ENCODE measurements at regions of chr11 and their contacts with region 1.

Region 1: GRCh38 chr11:58039589-58039988 is 8.8 kb downstream of the OR6Q1 start:
- DNase-seq: no peak
- ATAC-seq: no peak
- H3K4me3 ChIP-seq: no peak overlapping the region
- H3K27ac ChIP-seq: no peak overlapping the region
- H3K4me1 ChIP-seq: no peaks in the 10 kb centered on the region; the same call in 1 of the 2 replicates
- H3K27me3 ChIP-seq: no peaks in the 10 kb centered on the region; a peak in 1 of 5 replicates
- CTCF ChIP-seq: no peak
- EP300 ChIP-seq: no peak
- POLR2A ChIP-seq: no peak
- RAD21 ChIP-seq: no peak

Region 2: DNA sequence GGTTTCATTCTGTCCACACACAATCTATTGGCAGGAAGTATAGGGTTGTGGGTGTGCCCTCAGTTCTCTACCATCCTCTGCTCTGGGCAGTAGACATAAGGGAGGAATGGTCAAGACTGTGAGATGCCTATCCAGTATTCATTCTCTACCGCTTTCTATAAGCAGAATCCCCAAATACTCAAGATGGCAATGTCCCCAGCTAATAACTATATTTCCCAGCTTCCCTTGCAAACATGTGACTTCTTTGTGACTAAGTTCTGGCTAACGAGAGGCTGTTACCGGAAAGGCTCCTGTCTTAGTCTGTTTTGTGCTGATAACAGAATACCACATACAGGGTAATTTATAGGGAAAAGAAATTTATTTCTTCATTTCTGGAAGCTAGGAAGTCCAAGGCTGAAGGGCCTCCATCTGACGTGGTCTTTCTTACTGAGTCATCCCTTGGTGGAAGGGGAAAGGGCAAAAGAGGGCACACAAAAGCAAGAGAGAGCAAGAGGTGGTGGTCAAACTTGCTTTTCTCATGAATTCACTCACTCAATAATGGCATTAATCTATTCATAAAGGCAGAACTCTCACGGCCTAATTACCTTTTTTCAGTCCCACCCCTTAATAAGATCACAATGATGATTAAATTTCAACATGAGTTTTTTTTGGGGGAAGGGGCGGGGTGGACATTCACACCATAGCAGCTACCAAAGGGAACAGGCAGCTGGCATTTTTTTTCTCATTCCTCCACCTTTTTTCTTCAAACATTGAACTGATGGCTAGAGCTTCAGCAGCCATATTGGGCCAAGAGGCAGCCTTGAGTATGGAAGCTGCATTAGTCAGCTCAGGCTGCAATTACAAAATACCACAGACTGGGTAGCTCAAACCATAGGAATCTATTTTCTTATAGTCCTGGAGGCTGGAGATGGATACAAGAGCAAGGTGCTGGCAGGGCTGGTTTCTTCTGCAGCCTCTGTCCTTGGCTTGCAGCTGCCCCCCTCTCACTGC is 125.6 kb before region 1 on chr11:
- CTCF ChIA-PET with region 1: no interaction called
- POLR2A ChIA-PET with region 1: no interaction called
- in situ Hi-C with region 1: no loop called
- intact Hi-C with region 1: loop called (anchors 10 kb)
- DNase-seq: no peak
- ATAC-seq: no peak
- H3K4me3 ChIP-seq: no peak overlapping the region
- H3K27ac ChIP-seq: no peak overlapping the region
- H3K4me1 ChIP-seq: no peaks in the 10 kb centered on the region
- H3K27me3 ChIP-seq: peaks cover 5 to 18% of the 10 kb centered on the region in 2 experiments; a peak in 3 of 5 replicates
- CTCF ChIP-seq: no peak
- EP300 ChIP-seq: no peak
- POLR2A ChIP-seq: no peak
- RAD21 ChIP-seq: no peak

Region 3: GRCh38 chr11:57940044-57940756 is 99.4 kb before region 1 on chr11:
- CTCF ChIA-PET with region 1: no interaction called
- POLR2A ChIA-PET with region 1: no interaction called
- in situ Hi-C with region 1: no loop called
- intact Hi-C with region 1: no loop called
- DNase-seq: no peak
- ATAC-seq: no peak
- H3K4me3 ChIP-seq: no peak overlapping the region
- H3K27ac ChIP-seq: no peak overlapping the region
- H3K4me1 ChIP-seq: peaks cover 70% of the 10 kb centered on the region
- H3K27me3 ChIP-seq: no peaks in the 10 kb centered on the region; a peak in 1 of 5 replicates
- CTCF ChIP-seq: no peak
- EP300 ChIP-seq: no peak
- POLR2A ChIP-seq: no peak
- RAD21 ChIP-seq: no peak

Region 4: DNA sequence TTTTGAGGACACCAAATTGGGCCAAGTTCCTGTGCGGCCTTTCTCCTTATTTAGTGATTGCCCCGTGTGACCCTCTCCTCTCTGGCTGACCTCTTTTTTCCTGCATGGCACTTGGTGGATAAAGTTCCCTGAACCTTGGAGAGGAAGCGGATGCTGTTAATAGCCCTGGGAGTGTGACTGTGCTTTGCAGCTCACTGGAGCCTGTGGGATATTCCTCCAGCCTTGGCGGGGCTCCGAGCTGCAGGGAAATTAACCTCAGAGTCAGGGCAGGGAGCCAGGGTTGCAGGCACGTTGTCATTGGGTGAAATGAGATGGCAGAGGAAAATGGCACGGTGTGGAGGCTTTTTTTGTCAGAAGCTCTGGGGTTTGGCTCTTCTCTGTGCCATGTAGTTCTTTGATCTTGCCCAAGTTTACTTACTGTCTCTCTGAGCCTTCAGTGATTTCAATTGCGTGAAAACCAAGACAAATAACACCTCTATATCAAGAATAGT is 14.9 kb before region 1 on chr11:
- CTCF ChIA-PET with region 1: no interaction called
- POLR2A ChIA-PET with region 1: no interaction called
- in situ Hi-C with region 1: no loop called
- intact Hi-C with region 1: no loop called
- DNase-seq: no peak
- ATAC-seq: peak; percentile 41; the same call in 2 of the 3 replicates
- H3K4me3 ChIP-seq: no peak overlapping the region
- H3K27ac ChIP-seq: no peak overlapping the region
- H3K4me1 ChIP-seq: peaks cover 46% of the 10 kb centered on the region
- H3K27me3 ChIP-seq: no peaks in the 10 kb centered on the region
- CTCF ChIP-seq: no peak
- EP300 ChIP-seq: no peak
- POLR2A ChIP-seq: no peak
- RAD21 ChIP-seq: no peak